MCF 10A (cell line): ENCODE measurements at regions of chr15 and their contacts with region 1.

Region 1: GRCh38 chr15:93837450-93837849 is 393.9 kb upstream of the MCTP2 start:
- DNase-seq: peak; percentile 92
- H3K4me3 Mint-ChIP-seq: peak overlapping the region; percentile 32
- H3K27ac Mint-ChIP-seq: peak overlapping the region; percentile 89
- H3K4me1 Mint-ChIP-seq: peaks cover 10% of the 10 kb centered on the region
- H3K27me3 Mint-ChIP-seq: no peaks in the 10 kb centered on the region
- CTCF ChIP-seq: no peak

Region 2: GRCh38 chr15:93362821-93363220 is 474.6 kb before region 1 on chr15:
- CTCF ChIA-PET with region 1: no interaction called
- POLR2A ChIA-PET with region 1: no interaction called
- intact Hi-C with region 1: no loop called
- DNase-seq: no peak
- H3K4me3 Mint-ChIP-seq: no peak overlapping the region
- H3K27ac Mint-ChIP-seq: no peak overlapping the region
- H3K4me1 Mint-ChIP-seq: peaks cover 28% of the 10 kb centered on the region
- H3K27me3 Mint-ChIP-seq: no peaks in the 10 kb centered on the region
- CTCF ChIP-seq: no peak

Region 3: GRCh38 chr15:93929375-93930094 is 92.1 kb after region 1 on chr15:
- CTCF ChIA-PET with region 1: interaction called, 4 read pairs
- POLR2A ChIA-PET with region 1: interaction called, 13 read pairs
- intact Hi-C with region 1: no loop called
- DNase-seq: peak; percentile 91
- H3K4me3 Mint-ChIP-seq: peak overlapping the region; percentile 22
- H3K27ac Mint-ChIP-seq: peak overlapping the region; percentile 81
- H3K4me1 Mint-ChIP-seq: peaks cover 13% of the 10 kb centered on the region
- H3K27me3 Mint-ChIP-seq: no peaks in the 10 kb centered on the region
- CTCF ChIP-seq: no peak

Region 4: DNA sequence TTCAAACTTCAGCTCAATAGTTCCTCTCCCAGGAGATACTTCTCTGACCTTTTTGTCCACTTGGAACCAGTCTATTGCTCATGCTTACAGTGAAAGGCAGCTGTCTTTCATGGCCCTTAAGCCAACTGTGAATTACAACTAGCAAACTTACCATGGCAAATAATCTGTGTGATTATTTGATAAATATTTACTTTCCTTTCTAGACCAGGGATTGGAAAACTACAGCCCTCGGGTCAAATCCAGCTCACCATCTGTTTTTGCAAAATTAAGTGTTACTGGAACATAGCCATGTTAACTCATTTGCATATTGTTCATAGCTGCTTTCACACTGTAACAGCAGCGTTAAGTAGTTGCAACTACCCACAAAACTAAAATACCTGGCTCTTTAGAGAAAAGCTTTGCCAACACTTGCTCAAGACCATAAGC is 104.8 kb after region 1 on chr15:
- CTCF ChIA-PET with region 1: no interaction called
- POLR2A ChIA-PET with region 1: interaction called, 14 read pairs
- intact Hi-C with region 1: no loop called
- DNase-seq: peak; percentile 61
- H3K4me3 Mint-ChIP-seq: no peak overlapping the region
- H3K27ac Mint-ChIP-seq: peak overlapping the region; percentile 4
- H3K4me1 Mint-ChIP-seq: peaks cover 7% of the 10 kb centered on the region
- H3K27me3 Mint-ChIP-seq: no peaks in the 10 kb centered on the region
- CTCF ChIP-seq: no peak

Region 5: DNA sequence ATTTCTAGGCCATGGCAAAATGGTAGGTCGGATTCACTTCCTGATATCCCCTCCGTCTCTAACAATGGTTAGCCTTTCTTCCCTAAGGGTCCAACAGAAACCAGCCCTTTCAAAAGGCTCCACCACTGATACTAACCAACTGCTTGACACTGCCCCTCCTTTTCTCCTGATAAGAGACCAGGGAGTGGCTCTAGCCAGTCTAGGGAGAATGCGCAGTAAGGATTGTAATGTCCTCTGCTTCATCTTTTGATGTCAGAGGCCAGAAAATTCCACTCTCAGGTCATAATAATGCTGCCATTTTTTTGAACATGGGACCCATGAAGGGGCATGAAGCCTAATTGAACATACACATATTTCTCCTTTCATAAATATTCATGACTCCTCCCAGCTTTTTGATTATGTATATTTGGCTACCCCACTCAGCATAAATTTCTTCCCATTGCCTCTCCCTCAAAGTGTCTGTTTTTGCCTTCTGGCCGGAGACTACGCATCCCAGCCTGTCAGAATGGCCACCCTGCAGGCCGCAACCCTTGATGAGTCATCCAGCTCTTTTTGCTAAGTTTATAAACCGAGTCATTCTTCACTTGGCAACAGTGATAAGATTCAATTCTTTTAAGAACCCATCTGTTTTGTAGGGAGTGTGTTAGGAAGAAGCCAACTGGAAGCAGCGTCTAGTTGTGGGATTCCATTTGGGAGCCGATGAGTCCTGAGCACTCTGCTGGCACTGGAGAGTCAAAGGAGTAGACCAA is 204.9 kb after region 1 on chr15:
- CTCF ChIA-PET with region 1: no interaction called
- POLR2A ChIA-PET with region 1: no interaction called
- intact Hi-C with region 1: no loop called
- DNase-seq: peak; percentile 22
- H3K4me3 Mint-ChIP-seq: no peak overlapping the region
- H3K27ac Mint-ChIP-seq: no peak overlapping the region
- H3K4me1 Mint-ChIP-seq: peaks cover 5% of the 10 kb centered on the region
- H3K27me3 Mint-ChIP-seq: no peaks in the 10 kb centered on the region
- CTCF ChIP-seq: no peak